ENCODE measurements at regions of chr2 and their contacts with region 1.

Region 1: GRCh38 chr2:161586517-161587167 is 37.6 kb upstream of the SLC4A10 start:
- DNase-seq: no peak
- ATAC-seq: no peak
- H3K4me3 ChIP-seq: no peak overlapping the region
- H3K27ac ChIP-seq: no peak overlapping the region
- H3K4me1 ChIP-seq: no peaks in the 10 kb centered on the region
- H3K27me3 ChIP-seq: no peaks in the 10 kb centered on the region
- CTCF ChIP-seq: peak; percentile 34 to 63 (median 53)
- POLR2A ChIP-seq: no peak

Region 2: DNA sequence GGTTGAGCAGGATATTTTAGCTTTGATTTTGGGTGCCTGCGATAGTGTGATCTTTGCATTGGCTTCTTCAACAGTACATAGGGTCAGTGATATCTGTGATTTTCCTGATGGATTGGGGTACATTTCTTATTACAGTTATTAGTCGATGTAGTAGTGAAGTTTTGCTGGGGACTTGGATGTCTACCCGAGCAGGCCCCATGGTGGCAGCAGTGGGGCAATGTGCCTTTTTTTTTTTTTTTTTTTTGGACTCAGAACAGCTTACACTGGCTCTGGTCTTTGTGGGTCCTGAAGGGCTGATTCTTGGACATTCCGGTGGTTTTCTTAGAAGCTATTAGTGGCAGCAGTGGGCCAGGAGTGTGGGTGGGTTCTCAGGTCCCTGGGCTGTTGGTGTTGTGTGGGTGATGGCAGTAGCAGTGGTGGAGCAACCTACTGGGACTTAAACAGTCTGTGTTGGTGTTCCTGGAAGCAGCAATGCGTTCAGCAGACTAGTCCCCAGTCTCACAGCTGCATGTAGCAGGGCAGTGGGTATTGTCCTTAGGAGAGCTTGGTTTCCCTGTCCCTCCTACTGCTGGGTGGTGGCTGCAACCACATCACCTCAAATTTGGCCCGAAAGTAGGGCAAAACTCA is 16.1 kb before region 1 on chr2:
- intact Hi-C with region 1: no loop called
- DNase-seq: no peak
- ATAC-seq: no peak
- H3K4me3 ChIP-seq: no peak overlapping the region
- H3K27ac ChIP-seq: no peak overlapping the region
- H3K4me1 ChIP-seq: no peaks in the 10 kb centered on the region
- H3K27me3 ChIP-seq: no peaks in the 10 kb centered on the region
- CTCF ChIP-seq: no peak
- POLR2A ChIP-seq: no peak

Region 3: DNA sequence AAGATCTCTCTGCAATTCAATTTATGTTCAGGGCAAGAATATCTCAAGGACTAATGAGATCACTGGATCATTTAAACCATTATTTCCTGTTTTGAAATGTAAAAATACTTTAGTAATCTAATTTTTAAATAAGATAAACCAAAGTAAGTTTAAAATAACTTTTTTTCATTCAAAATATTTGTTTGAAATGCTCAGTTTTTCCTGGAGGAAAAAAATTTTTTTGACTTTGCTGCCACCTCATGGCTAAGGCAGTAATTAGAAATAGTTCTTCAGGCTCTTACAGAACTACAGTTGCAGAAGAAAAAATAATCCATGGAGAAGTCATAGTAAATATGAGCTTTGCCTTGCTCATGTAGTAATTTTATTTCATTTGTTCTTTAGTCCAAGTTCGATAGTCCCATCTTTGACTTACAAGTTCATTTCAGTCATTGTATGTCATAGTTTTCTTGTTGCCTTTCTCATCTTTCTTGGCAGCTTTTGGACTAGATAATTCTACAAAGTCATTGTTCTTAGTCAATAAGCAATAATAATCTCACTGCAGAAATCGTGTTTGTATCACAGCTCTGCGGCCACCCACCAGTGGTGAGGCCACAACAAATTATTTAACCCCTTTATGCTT is 360.0 kb after region 1 on chr2:
- intact Hi-C with region 1: loop called in 8 of 10 experiments (anchors 2 to 10 kb)
- DNase-seq: no peak
- ATAC-seq: no peak
- H3K4me3 ChIP-seq: no peak overlapping the region
- H3K27ac ChIP-seq: no peak overlapping the region
- H3K4me1 ChIP-seq: no peaks in the 10 kb centered on the region
- H3K27me3 ChIP-seq: peaks cover 0 to 20% (median 0%) of the 10 kb centered on the region in 9 donors
- CTCF ChIP-seq: peak in 11 of 12 donors; percentile 22 to 61 (median 45)
- POLR2A ChIP-seq: no peak

Region 4: DNA sequence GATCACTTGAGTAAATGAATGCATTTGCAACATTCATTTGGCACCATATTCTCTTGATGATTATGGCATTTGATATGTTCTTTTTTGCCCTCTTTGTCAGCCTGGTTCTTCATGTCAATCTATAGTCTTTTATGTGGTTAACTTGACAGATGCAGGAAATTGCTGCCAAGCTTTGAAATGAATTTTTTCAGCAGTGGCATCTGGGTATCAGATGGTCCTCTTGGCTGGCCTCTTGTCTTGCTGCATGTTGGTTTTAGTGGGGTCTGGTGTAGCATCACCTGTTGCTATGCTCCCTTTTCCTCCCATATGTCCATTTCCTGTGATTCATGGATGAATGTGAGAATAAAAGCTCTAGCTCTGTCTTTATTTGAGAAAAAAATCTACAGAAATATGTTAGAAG is 367.5 kb after region 1 on chr2:
- intact Hi-C with region 1: loop called in 8 of 10 experiments (anchors 2 to 10 kb)
- DNase-seq: no peak
- ATAC-seq: no peak
- H3K4me3 ChIP-seq: no peak overlapping the region
- H3K27ac ChIP-seq: no peak overlapping the region
- H3K4me1 ChIP-seq: peaks cover 0 to 4% (median 0%) of the 10 kb centered on the region in 12 donors
- H3K27me3 ChIP-seq: peaks cover 0 to 11% (median 0%) of the 10 kb centered on the region in 9 donors
- CTCF ChIP-seq: no peak
- POLR2A ChIP-seq: no peak

Region 5: GRCh38 chr2:162123806-162124758 is 537.4 kb after region 1 on chr2:
- intact Hi-C with region 1: loop called in 4 of 10 experiments (anchors 5 to 10 kb)
- DNase-seq: no peak
- ATAC-seq: peak in 2 of 4 donors; percentile 49 to 55
- H3K4me3 ChIP-seq: no peak overlapping the region
- H3K27ac ChIP-seq: no peak overlapping the region
- H3K4me1 ChIP-seq: peaks cover 0 to 18% (median 0%) of the 10 kb centered on the region in 12 donors
- H3K27me3 ChIP-seq: no peaks in the 10 kb centered on the region
- CTCF ChIP-seq: peak; percentile 74 to 96 (median 86)
- POLR2A ChIP-seq: no peak

Measured in heart left ventricle (tissue), 16 donors.